Activated B cell treated with CpG ODN at 0.5 μM for 24 hours (primary cell): ENCODE measurements at regions of chr22 and their contacts with region 1.

Region 1: DNA sequence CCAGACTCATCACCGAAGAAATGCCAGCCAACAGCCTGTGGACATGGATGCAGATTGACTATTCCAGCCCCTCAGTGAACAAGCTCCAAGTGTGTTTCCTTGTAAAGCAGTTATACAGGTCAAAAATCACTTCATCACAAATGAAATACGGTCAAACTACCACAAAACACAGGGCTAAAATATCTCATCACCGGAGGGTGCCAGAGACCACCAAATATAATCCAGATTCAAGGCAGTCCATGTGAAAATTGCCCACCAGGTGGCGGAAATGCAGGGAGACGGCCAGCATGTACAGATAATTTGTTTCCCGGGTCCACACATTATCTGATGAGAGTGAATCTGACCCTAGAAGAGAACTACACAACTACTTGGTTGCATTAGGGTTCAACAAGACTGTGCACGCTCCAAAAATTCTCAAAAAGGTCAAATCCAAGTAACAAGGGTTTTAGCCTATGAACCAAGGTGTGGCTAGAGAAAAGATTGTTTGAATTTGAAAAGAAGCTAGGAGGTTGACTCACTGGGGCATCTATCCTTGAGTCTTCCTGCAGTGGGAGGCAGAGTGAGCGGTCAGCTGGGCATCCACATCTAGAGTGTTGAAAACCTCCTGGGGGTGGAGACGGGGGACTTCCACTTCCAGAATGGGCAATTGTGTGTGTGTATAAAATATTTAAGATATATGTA is 71.7 kb downstream of the IGLL5 start:
- DNase-seq: no peak
- ATAC-seq: peak; percentile 63
- H3K4me3 Mint-ChIP-seq: no peak overlapping the region
- H3K27ac Mint-ChIP-seq: no peak overlapping the region
- H3K4me1 Mint-ChIP-seq: peaks cover 15% of the 10 kb centered on the region
- H3K27me3 Mint-ChIP-seq: no peaks in the 10 kb centered on the region
- CTCF ChIP-seq: peak; percentile 94

Region 2: DNA sequence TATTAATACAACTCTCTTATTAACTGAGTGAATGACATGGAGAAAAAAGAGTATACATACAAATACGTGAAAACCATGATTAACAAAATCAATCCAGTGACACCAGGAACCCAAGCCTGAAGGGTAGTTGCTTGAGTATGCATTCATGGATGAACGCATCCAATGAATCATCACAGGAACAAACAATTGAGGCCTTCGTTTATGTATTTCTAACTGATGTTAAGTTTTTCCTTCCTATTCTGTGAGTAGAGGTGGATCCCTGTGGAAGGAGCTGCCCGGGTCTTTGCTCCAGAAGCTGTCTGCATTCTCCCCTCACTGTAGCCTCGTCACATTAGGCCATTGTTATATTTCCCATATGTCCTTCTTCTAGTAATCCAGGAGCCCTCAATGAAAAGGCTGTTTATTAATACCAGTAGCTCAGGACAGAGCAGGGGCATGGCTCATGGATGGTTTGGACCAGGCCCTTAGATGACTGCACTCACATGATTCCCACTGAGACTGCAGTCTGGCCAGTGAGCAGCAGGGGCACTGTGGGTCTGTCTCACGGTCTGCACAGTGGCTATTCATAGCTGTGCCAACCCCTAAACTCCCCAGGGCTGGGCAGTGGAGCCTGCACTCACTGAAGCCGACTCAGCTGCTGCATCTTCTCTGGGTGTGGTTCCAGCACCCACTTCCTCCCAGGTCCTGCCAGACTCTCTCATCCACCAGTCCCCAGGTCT is 848.6 kb before region 1 on chr22:
- CTCF ChIA-PET with region 1: interaction called, 4 read pairs
- POLR2A ChIA-PET with region 1: interaction called, 3 read pairs
- intact Hi-C with region 1: loop called (anchors 5 kb)
- DNase-seq: peak; percentile 82
- ATAC-seq: peak; percentile 92
- H3K4me3 Mint-ChIP-seq: peak overlapping the region; percentile 67
- H3K27ac Mint-ChIP-seq: peak overlapping the region; percentile 95
- H3K4me1 Mint-ChIP-seq: peaks cover 47% of the 10 kb centered on the region
- H3K27me3 Mint-ChIP-seq: no peaks in the 10 kb centered on the region
- CTCF ChIP-seq: no peak

Region 3: DNA sequence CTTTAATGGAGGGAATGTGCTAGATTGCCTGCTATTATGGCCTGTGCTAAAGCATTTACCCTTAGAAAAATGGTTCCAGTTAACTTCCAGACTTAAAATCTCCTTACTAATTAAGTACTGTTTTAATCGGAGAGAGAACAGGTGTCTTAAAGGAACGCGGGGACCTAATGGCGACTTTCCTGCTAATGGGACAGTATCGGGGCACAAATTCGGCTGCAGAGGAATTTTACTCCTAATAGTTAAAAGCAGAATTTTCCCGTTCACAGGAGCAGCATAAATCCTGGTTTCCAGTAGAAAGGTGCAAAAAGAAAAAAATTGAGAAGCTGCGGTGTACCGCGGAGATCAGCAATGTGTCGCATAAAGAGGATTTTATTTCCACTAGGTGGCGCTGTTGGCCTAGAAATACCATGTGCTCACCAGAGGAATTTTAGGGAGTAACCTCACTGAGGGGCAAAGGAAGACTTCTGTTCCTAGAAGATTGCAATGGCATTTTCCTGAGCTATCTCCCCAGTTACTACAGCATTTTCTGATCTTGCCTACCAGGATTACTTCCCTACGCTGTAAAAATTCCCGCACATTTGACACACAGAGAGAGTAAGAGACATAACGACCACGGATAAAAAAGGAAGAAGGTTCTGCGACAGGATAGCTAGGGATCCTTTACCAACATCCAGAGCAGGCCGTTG is 495.3 kb before region 1 on chr22:
- CTCF ChIA-PET with region 1: interaction called, 11 read pairs
- POLR2A ChIA-PET with region 1: no interaction called
- intact Hi-C with region 1: loop called (anchors 2 kb)
- DNase-seq: no peak
- ATAC-seq: peak; percentile 61
- H3K4me3 Mint-ChIP-seq: peak overlapping the region; percentile 24
- H3K27ac Mint-ChIP-seq: peak overlapping the region; percentile 61
- H3K4me1 Mint-ChIP-seq: peaks cover 19% of the 10 kb centered on the region
- H3K27me3 Mint-ChIP-seq: peaks cover 4% of the 10 kb centered on the region
- CTCF ChIP-seq: peak; percentile 76

Region 4: DNA sequence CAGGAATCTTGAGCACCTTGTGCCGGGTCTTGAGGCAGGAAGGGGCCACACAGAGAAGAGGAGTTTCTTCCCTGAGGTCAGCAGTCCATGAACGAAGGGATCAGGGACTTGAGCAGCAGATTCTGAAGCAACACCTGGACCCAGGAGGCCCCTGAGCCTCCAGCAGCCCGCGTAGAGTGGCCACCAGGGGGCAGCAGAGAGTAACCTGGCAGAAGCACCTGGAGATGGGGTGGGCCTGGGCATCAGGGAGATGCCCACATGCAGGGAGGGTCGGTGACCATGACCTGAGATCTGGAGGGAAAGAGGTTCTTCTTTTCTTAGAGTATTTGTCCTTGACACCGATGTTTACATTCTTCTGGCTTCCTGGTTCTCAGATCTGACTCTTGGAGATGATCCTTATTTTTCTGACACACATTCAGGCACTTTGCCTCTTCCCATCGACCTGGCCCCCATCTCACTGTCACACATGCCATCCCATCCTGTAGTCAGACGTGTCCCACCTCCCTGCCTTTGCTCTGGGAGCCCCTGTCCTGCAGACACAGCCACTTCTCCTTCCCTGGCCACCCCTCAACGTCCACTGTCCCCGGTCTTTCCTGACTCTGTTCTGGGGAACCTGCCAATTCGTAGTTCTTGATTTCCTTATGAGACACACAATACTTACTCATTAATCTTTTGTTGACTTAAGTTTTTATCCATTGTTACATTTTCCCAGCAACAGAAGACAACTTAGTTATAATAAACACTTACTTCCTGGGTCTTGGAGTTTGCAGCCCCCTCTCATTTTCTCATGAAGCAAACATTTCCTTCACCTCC is 248.4 kb before region 1 on chr22:
- CTCF ChIA-PET with region 1: interaction called, 13 read pairs
- POLR2A ChIA-PET with region 1: no interaction called
- intact Hi-C with region 1: no loop called
- DNase-seq: peak; percentile 70
- ATAC-seq: peak; percentile 55
- H3K4me3 Mint-ChIP-seq: no peak overlapping the region
- H3K27ac Mint-ChIP-seq: peak overlapping the region; percentile 24
- H3K4me1 Mint-ChIP-seq: peaks cover 49% of the 10 kb centered on the region
- H3K27me3 Mint-ChIP-seq: no peaks in the 10 kb centered on the region
- CTCF ChIP-seq: no peak

Region 5: GRCh38 chr22:22810018-22810427 is 149.3 kb before region 1 on chr22:
- CTCF ChIA-PET with region 1: interaction called, 151 read pairs
- POLR2A ChIA-PET with region 1: interaction called, 3 read pairs
- intact Hi-C with region 1: loop called (anchors 1 kb)
- DNase-seq: peak; percentile 60
- ATAC-seq: peak; percentile 76
- H3K4me3 Mint-ChIP-seq: no peak overlapping the region
- H3K27ac Mint-ChIP-seq: no peak overlapping the region
- H3K4me1 Mint-ChIP-seq: peaks cover 21% of the 10 kb centered on the region
- H3K27me3 Mint-ChIP-seq: peaks cover 3% of the 10 kb centered on the region
- CTCF ChIP-seq: peak; percentile 80

Region 6: DNA sequence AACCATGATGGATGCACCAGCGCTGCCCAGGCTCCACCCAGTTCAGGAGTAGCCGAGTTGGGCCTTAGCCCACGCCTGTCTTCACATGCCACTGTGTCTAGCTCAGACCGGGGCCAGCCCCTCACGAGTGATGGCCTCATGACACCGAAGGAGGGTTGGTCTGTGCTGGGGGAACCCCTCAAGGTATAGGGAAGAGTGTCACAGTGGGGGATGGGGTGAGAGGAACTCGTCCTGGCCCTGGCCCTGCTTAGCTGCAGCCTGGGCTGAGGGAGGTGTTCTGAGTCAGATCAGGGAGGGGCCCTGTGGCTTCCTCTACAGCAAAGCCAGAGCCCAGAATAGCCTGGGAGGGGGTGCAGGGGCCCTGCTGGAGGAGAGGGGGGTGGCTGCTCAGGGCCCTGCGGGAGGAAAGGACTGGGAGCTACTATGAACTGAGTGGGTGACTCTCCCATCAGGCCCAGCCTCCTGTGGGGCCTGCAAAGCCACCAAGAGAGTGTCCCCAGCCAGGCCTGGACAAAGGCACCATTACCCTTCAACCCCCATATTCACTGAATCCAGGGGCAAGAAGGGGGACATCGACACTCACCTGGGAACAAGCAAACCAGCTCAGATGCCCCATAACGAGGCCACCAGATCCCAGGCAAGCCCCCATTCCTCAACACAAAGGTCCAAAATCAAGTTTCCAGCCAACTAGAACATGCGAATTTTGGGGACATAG is 30.5 kb before region 1 on chr22:
- CTCF ChIA-PET with region 1: interaction called, 3 read pairs
- POLR2A ChIA-PET with region 1: interaction called, 23 read pairs
- intact Hi-C with region 1: loop called (anchors 2 kb)
- DNase-seq: peak; percentile 71
- ATAC-seq: peak; percentile 91
- H3K4me3 Mint-ChIP-seq: peak overlapping the region; percentile 56
- H3K27ac Mint-ChIP-seq: peak overlapping the region; percentile 96
- H3K4me1 Mint-ChIP-seq: peaks cover 100% of the 10 kb centered on the region
- H3K27me3 Mint-ChIP-seq: no peaks in the 10 kb centered on the region
- CTCF ChIP-seq: no peak

Region 7: DNA sequence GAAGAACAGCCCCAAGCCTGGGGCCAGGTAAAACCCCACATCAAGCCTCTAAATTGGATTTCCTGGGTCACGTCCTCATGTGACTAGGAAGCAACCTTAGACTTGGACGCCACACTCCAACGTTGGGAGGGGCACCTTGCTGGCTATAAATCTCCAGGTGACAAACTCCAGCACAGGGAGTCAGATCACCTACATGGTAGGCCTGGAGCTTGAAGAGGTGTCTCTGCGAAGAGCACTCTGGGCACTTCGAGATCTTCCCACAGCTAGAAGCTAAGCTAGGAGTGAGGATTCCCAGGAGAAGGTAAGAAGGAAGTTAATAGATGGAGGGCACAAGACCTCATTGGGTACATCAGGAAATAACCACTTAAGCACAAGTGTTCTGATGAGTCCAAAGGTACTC is 33.9 kb after region 1 on chr22:
- CTCF ChIA-PET with region 1: no interaction called
- POLR2A ChIA-PET with region 1: no interaction called
- intact Hi-C with region 1: no loop called
- DNase-seq: no peak
- ATAC-seq: no peak
- H3K4me3 Mint-ChIP-seq: no peak overlapping the region
- H3K27ac Mint-ChIP-seq: no peak overlapping the region
- H3K4me1 Mint-ChIP-seq: no peaks in the 10 kb centered on the region
- H3K27me3 Mint-ChIP-seq: peaks cover 7% of the 10 kb centered on the region
- CTCF ChIP-seq: no peak

Region 8: DNA sequence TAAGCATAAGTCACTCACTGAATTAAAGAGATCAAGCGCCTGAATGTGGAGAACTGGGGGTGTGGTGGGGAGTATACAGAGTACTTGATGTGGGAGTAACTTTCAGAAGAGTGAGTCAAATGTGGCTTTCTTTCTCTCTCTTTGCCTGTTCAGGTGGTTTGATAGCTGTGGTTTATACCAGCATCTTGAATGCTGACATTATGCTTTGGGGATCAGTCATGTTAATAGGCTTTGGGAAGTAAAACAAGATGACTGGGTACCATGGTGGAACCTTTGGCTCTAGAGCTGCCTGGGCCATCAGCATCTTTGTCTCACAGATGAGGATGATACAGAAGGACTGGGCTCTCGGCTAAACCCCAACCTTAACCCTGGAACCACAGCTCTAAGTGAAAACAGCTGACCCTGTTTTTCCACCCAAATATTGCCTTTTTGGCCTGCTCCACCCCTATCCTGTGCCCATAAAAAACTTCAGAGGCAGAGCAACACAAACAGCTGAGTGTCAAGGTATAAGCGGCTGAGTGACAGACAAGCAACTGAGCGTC is 52.9 kb after region 1 on chr22:
- CTCF ChIA-PET with region 1: no interaction called
- POLR2A ChIA-PET with region 1: no interaction called
- intact Hi-C with region 1: no loop called
- DNase-seq: no peak
- ATAC-seq: no peak
- H3K4me3 Mint-ChIP-seq: no peak overlapping the region
- H3K27ac Mint-ChIP-seq: no peak overlapping the region
- H3K4me1 Mint-ChIP-seq: no peaks in the 10 kb centered on the region
- H3K27me3 Mint-ChIP-seq: no peaks in the 10 kb centered on the region
- CTCF ChIP-seq: no peak

Region 9: GRCh38 chr22:23137905-23138561 is 178.7 kb after region 1 on chr22:
- CTCF ChIA-PET with region 1: interaction called, 265 read pairs
- POLR2A ChIA-PET with region 1: interaction called, 3 read pairs
- intact Hi-C with region 1: no loop called
- DNase-seq: peak; percentile 42
- ATAC-seq: peak; percentile 60
- H3K4me3 Mint-ChIP-seq: peak overlapping the region; percentile 68
- H3K27ac Mint-ChIP-seq: peak overlapping the region; percentile 94
- H3K4me1 Mint-ChIP-seq: peaks cover 63% of the 10 kb centered on the region
- H3K27me3 Mint-ChIP-seq: no peaks in the 10 kb centered on the region
- CTCF ChIP-seq: no peak

Region 10: DNA sequence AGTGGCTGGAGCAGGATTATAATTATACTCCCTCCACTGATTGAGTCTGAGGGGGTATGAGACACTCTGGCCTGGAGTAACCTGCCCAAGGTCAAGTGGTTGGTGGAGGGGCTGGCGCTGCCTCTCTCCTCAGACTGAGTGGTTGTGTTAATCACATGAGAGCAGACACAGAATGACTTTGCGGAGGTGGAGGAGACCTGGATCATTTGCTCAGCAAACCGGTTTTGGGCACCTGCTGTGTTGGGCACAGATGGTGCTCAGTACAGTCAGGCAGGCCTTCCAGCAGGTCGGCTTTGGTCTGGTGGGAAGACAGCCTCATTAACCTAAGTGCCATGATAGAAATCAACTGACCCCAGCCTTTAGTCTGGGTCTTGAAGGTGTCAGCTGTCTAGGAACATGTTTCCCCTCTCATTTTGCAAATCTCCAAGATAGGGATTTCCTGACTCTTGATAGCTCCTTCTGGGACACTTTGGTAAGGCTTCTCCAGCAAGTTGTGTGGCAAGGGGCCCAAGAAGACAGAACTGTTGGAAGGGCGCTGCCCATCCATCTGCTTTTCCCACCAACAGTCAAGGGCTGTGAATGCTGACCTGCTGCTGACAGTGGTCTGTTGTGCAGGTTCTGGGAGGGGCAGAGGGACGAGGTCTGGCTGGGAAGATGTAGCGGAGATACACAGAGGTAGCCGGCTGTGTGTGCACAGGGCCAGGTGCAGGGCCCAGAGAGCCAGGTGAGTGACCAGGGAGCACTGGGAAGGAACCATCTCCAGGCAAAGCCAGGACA is 233.1 kb after region 1 on chr22:
- CTCF ChIA-PET with region 1: no interaction called
- POLR2A ChIA-PET with region 1: no interaction called
- intact Hi-C with region 1: no loop called
- DNase-seq: no peak
- ATAC-seq: no peak
- H3K4me3 Mint-ChIP-seq: no peak overlapping the region
- H3K27ac Mint-ChIP-seq: no peak overlapping the region
- H3K4me1 Mint-ChIP-seq: no peaks in the 10 kb centered on the region
- H3K27me3 Mint-ChIP-seq: no peaks in the 10 kb centered on the region
- CTCF ChIP-seq: no peak

Region 11: DNA sequence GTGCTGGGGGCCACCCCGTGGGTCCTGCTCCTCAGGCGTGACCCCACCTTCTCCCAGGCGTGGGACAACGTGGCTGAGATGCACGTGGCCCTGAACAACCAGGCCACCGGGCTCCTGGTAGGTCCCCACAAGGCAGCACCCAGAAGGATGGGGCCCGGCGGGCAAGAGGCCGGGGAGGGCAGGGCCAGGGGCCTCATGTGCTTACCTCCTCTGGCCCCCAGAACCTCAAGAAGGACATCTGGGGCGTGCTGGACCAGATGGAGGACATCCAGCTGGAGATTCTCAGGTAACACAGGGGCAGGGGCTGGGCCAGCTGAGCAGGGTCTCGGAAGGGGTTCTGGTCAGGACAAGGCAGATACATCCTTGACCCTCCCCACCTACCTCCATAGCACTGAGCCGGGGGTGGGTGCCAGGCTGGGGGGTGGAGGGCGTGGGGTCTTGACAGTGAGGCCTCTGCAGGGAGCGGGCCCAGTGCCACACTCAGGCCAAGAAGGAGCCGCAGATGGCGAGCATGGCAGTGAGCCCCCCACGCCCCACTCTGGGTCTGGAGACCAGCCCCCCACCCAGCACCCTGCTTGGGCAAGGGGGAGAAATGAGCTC is 434.5 kb after region 1 on chr22:
- CTCF ChIA-PET with region 1: no interaction called
- POLR2A ChIA-PET with region 1: no interaction called
- intact Hi-C with region 1: no loop called
- DNase-seq: no peak
- ATAC-seq: no peak
- H3K4me3 Mint-ChIP-seq: no peak overlapping the region
- H3K27ac Mint-ChIP-seq: no peak overlapping the region
- H3K4me1 Mint-ChIP-seq: no peaks in the 10 kb centered on the region
- H3K27me3 Mint-ChIP-seq: no peaks in the 10 kb centered on the region
- CTCF ChIP-seq: no peak